ENCODE measurements at regions of chr2 and their contacts with region 1.

Region 1: GRCh38 chr2:196808083-196808665 is 981 bp downstream of the C2orf66 start:
- DNase-seq: peak; percentile 27
- H3K4me3 ChIP-seq: no peak overlapping the region
- H3K27ac ChIP-seq: no peak overlapping the region
- H3K4me1 ChIP-seq: no peaks in the 10 kb centered on the region
- CTCF ChIP-seq: peak; percentile 53; the same call in 1 of the 2 replicates

Region 2: GRCh38 chr2:196823750-196824522 is 15.8 kb after region 1 on chr2:
- CTCF ChIA-PET with region 1: no interaction called
- POLR2A ChIA-PET with region 1: interaction called, 8 read pairs
- intact Hi-C with region 1: loop called (anchors 2 kb)
- DNase-seq: no peak
- H3K4me3 ChIP-seq: no peak overlapping the region
- H3K27ac ChIP-seq: no peak overlapping the region
- H3K4me1 ChIP-seq: no peaks in the 10 kb centered on the region
- CTCF ChIP-seq: no peak

Measured in OCI-LY7 (cell line).